Prostate gland (tissue), 2 donors: ENCODE measurements at regions of chr13 and their contacts with region 1.

Region 1: GRCh38 chr13:98397221-98397620 is 179.7 kb downstream of the STK24 start:
- DNase-seq: no peak
- H3K4me3 ChIP-seq: no peak overlapping the region
- H3K27ac ChIP-seq: no peak overlapping the region
- H3K4me1 ChIP-seq: no peaks in the 10 kb centered on the region
- H3K27me3 ChIP-seq: no peaks in the 10 kb centered on the region
- CTCF ChIP-seq: peak in 2 of 4 experiments; percentile 13 to 34
- POLR2A ChIP-seq: no peak

Region 2: GRCh38 chr13:98033277-98034247 is 363.7 kb before region 1 on chr13:
- intact Hi-C with region 1: loop called (anchors 10 kb)
- DNase-seq: peak; percentile 10
- H3K4me3 ChIP-seq: no peak overlapping the region
- H3K27ac ChIP-seq: no peak overlapping the region
- H3K4me1 ChIP-seq: no peaks in the 10 kb centered on the region
- H3K27me3 ChIP-seq: no peaks in the 10 kb centered on the region
- CTCF ChIP-seq: no peak
- POLR2A ChIP-seq: no peak

Region 3: DNA sequence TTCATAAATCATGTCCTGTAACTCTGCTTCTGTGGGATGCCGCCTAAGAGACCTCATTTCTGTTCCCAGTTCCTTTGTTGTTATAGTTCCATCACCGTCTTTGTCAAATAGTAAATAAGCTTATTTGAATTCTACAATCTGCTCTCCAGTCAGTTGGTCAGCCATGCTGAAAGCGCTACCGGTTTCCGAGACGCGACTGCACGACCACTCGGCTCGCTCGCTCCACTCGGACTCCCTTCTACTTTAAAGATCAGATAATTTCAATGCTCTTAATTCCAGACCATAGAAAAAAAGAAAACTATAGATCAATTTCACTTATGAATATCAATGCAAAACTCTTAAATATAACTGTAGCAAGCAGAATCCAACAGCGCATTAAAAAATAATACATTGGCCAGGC is 243.9 kb after region 1 on chr13:
- intact Hi-C with region 1: no loop called
- DNase-seq: no peak
- H3K4me3 ChIP-seq: no peak overlapping the region
- H3K27ac ChIP-seq: no peak overlapping the region
- H3K4me1 ChIP-seq: no peaks in the 10 kb centered on the region
- H3K27me3 ChIP-seq: no peaks in the 10 kb centered on the region
- CTCF ChIP-seq: no peak
- POLR2A ChIP-seq: no peak